ENCODE measurements at regions of chr13 and their contacts with region 1.

Region 1: DNA sequence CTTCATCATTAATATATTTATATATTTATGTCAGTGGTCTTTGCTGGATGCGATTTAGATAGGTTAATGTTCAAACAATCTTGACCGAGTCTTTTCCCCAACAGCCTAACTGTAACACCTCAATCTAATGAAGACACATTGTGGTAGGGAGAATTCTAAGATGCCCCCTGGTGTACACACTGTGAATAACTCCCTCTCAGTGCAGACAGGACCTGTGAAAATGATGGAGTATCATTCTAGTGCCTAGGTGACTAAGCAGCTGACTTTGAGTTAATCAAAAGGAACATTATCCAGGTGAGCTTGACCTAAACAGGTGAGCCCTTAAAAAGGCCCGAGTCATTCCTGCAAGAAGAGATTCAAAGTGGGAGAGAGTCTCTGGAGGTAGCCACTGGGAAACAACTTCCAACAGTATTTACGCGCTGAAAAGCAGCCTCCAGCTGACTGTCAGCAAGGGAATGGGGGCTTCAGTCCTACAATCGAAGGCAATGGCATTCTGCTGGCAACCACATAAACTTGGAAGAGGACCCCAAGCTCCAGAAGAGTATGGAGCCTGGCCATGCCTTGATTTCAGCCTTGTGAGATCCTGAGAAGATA is 28.0 kb upstream of the KBTBD7 start:
- DNase-seq: no peak
- ATAC-seq: peak; percentile 78

Region 2: DNA sequence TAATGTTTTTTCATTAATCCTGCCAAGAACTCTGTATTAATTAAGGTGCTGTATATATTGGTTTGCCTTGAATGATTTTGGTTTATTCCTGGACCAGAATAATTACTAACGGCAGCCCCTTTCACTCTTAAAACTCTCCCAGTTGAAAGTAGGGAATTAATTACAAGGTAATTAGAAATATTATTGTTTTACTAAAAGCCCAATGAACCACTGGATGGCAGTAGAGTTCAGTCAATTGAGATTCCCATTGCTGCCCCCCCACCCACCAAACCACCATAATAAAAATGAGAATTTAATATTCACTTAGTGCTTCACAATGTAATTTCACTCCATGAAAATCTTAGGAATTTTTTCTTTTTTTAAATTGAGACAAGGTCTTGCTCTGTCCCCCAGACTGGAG is 147.3 kb before region 1 on chr13:
- intact Hi-C with region 1: loop called (anchors 10 kb)
- DNase-seq: no peak
- ATAC-seq: peak; percentile 40

Region 3: GRCh38 chr13:41588899-41589298 is 366.5 kb after region 1 on chr13:
- intact Hi-C with region 1: no loop called
- DNase-seq: no peak
- ATAC-seq: no peak

Measured in left ventricle myocardium superior (tissue), 1 donor.